ENCODE measurements at regions of chr16 and their contacts with region 1.

Region 1: GRCh38 chr16:67521095-67521804 is 7.4 kb upstream of the RIPOR1 start:
- DNase-seq: peak; percentile 66
- H3K4me3 ChIP-seq: peak overlapping the region; percentile 65
- CTCF ChIP-seq: peak; percentile 99

Region 2: GRCh38 chr16:67296422-67296821 is 224.8 kb before region 1 on chr16:
- CTCF ChIA-PET with region 1: no interaction called
- POLR2A ChIA-PET with region 1: no interaction called
- DNase-seq: no peak
- H3K4me3 ChIP-seq: no peak overlapping the region
- CTCF ChIP-seq: no peak

Region 3: DNA sequence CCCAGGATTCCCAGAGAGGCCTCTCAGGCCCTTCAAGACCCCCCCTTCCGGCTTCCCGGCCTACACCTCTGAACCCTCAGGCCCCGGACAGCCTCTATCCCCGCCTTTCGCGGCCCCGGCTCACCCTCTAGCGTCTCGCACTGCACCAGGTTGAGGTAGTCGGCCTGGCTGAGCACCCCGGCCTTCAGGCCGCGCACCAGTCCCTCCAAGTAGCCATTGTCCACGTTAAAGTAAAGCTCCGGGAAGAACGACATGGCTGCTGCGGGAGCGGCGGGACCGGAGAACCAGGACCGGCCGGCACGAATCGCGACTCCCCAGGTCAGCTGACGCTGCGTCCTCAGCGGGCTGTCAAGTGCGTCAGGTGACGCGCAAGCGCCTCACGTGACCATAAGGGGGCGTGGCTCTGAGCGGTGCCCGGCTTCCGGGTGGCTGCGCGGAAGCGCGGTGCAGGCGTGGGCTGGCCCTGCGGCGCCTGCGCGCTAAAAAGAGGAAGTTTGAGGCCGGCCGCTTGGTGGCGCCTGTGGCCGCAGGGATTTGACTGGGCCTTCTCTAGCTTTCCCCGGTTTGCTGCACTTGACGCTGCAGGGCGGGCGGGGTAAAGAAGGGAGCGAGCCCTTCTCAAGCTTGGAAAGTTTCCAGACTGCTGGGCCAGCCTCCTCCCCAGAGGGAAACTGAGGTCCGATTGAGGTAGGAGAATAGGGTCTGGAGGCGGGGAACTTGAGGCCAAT is 40.3 kb before region 1 on chr16 and contains the start of gene ATP6V0D1:
- CTCF ChIA-PET with region 1: interaction called, 661 read pairs
- POLR2A ChIA-PET with region 1: interaction called, 7 read pairs
- DNase-seq: peak; percentile 76
- H3K4me3 ChIP-seq: peak within 1 kb of the TSS; percentile 98
- CTCF ChIP-seq: peak; percentile 90

Region 4: DNA sequence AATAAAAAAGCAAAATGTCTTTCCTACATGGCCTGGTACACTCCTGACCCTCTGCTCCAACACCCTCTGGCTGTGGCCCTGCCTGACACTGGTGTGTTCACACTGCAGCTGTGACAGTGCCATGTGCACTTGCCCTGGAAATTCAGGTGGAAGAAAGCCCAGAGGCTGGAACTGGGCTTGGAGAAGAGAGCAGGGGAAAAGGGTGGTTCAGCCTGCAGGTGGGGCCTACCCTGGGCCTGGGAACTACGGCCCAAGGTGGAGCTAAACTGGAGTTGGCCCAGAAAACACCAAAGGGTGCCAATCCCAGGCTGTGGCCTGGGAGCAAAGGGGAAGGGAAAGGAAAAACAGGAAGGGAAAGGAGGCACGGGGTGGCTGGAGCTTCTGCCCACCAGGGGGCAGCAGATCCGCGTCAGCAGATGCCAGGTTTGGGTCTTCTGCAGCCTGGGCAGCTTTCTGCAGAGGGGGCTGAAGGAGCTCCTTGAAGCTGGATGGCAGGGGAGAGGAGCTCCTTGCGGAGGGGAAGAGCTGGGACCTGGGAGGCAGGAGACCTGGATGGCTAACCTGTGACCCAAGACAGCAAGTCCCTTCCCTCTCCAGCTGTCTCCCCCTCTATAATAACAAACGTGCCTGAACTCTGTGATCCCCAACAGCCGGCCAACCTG is 25.6 kb after region 1 on chr16:
- CTCF ChIA-PET with region 1: interaction called, 80 read pairs
- POLR2A ChIA-PET with region 1: interaction called, 3 read pairs
- DNase-seq: no peak
- H3K4me3 ChIP-seq: no peak overlapping the region
- CTCF ChIP-seq: peak; percentile 93

Region 5: DNA sequence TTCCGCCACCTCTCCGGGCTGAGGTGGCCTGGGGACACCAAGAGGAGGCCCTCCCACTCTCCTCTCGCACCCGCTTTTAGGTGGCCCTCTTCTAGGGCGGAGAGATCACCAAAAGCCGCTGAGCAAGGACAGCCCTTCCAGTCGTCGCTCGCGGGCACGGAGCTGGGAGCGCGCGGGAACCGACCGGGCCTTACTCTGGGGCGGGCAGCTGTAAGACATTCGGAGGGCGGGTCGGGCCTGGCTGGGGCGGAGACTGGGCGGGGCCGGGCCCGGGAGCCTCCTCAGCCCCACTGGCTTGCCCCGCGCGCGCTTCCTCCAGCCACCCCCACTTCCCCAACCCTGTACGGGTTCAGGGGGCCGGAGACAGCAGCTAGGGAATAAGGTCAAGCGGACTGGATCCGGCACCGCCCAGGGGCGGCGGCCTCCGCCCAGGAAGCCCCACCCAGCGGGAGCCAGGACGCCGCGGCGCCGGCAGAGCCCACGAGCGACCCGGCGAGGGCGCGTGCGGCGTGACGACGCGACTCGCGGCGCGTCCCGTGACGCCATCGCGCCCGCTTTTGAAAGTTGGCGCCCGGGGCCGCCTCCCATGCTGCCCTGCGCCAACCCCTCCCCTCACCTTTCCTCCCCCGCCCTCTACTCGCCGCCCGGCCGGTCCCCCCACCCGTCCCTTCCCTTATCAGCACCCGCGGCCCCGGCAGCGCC is 40.7 kb after region 1 on chr16:
- CTCF ChIA-PET with region 1: interaction called, 28 read pairs
- POLR2A ChIA-PET with region 1: interaction called, 3 read pairs
- DNase-seq: no peak
- H3K4me3 ChIP-seq: peak overlapping the region; percentile 83
- CTCF ChIP-seq: no peak

Region 6: DNA sequence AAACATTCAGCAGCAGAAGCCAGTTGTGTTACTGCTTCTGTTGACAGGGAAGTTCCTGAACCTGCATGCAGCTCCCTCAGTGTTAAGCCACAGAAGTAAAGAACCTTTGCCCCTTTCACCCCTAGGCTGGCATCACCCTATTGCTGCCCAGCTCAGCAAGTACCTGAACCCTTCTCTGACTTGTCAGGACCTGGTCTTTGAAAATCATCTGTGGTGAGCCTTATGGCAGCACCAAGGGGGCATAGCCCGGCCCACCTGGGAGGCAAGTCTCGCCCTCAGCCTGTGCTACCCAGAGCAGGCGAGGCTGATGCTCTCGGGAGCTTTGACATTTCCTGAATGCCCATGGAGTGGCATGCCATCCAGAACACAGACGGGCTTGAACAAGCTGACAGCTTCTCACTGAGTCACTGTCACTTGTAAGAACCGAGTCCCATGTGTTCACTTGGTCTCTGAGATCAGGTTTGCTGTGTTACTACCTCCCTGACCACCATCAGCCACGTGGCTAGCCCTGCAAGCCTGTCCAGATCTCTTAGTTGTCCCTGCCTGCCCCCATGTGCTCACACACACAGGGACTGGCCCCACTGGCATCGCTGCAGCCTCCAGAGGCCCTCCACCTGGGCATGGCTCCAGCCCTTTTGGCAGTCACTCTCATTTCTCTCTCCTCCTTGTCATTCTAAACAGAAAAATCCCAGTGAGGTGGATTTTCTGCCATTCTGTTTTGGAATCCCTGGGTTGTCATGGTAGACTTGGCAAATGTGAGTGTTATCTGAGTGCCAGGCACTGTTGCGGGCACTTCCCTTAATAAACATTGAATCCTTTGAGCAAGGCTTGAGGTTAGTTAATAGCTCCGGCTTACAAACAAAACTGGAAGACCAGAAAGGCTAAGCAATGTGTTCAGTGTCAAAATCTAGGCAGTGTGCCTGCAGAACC is 120.8 kb after region 1 on chr16:
- CTCF ChIA-PET with region 1: interaction called, 174 read pairs
- POLR2A ChIA-PET with region 1: no interaction called
- DNase-seq: no peak
- H3K4me3 ChIP-seq: no peak overlapping the region
- CTCF ChIP-seq: no peak

Region 7: GRCh38 chr16:67713647-67714273 is 192.5 kb after region 1 on chr16:
- CTCF ChIA-PET with region 1: interaction called, 11 read pairs
- POLR2A ChIA-PET with region 1: no interaction called
- DNase-seq: no peak
- H3K4me3 ChIP-seq: no peak overlapping the region
- CTCF ChIP-seq: no peak

Region 8: DNA sequence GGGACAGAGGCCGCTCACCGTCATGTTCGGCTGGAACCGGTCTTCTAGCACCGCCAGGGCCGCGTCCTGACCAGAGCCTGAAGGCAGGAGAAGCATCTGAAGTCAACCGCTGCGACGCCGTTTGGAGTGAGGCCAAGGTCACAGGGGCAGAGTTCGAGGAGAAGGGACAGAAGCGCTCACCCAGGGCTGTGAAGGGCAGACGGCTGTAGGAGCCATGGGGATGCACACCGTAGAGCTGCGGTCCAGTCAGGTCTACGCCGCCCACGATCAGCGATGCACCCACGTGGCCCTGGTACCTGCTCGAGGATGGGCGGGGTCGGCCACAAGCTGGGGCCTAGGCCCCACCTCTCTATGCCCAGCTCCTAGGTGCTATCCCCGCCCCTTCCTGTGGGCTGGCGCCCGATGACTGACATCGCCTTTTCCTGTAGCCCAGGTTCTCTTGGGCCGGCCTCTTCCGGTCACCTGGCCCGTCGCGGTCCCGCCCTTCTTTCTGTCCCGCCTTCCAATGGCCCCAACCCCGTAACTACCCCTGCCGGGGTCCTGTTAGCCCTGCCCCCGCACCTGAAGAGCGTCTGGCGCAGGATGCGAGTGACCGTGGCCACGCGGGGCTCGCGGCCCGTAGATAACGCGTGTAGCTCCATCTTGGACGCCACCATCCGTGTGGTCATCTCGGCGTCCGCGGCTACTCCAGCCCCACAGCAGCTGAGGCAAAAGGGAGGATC is 414.3 kb after region 1 on chr16:
- CTCF ChIA-PET with region 1: interaction called, 14 read pairs
- POLR2A ChIA-PET with region 1: no interaction called
- DNase-seq: peak; percentile 56
- H3K4me3 ChIP-seq: peak overlapping the region; percentile 100
- CTCF ChIP-seq: no peak